ENCODE measurements at regions of chrX and their contacts with region 1.

Region 1: DNA sequence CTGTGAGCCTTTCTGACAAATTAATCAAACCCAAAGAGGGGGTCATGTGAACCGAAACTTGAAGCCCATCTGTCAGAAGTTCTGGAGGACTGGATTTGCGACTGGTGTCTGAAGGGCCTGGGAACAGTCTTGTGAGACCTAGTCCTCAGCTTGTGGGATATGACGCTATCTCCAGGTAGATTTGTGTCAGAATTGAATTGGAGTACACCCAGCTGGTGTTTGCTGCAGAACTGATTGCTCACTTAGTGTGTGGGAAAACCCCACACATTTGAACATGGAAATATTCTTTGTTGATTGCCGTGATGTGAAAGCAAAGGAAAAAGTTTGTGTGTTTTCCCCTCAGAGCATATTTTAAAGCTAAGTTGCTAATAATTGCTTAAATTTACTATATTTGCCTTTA is 30.3 kb upstream of the TMSB15B start:
- DNase-seq: no peak
- H3K4me3 Mint-ChIP-seq: no peak overlapping the region
- H3K27ac Mint-ChIP-seq: peak overlapping the region; percentile 51
- H3K4me1 Mint-ChIP-seq: peaks cover 3% of the 10 kb centered on the region
- H3K27me3 Mint-ChIP-seq: no peaks in the 10 kb centered on the region

Region 2: GRCh38 chrX:103845165-103845653 is 86.9 kb before region 1 on chrX:
- intact Hi-C with region 1: loop called (anchors 5 kb)
- DNase-seq: peak; percentile 82
- H3K4me3 Mint-ChIP-seq: no peak overlapping the region
- H3K27ac Mint-ChIP-seq: no peak overlapping the region
- H3K4me1 Mint-ChIP-seq: peaks cover 2% of the 10 kb centered on the region
- H3K27me3 Mint-ChIP-seq: no peaks in the 10 kb centered on the region

Region 3: GRCh38 chrX:103918581-103919269 is 13.4 kb before region 1 on chrX:
- intact Hi-C with region 1: loop called (anchors 2 kb)
- DNase-seq: peak; percentile 88
- H3K4me3 Mint-ChIP-seq: peak overlapping the region; percentile 97
- H3K27ac Mint-ChIP-seq: peak overlapping the region; percentile 97
- H3K4me1 Mint-ChIP-seq: peaks cover 14% of the 10 kb centered on the region
- H3K27me3 Mint-ChIP-seq: no peaks in the 10 kb centered on the region

Region 4: DNA sequence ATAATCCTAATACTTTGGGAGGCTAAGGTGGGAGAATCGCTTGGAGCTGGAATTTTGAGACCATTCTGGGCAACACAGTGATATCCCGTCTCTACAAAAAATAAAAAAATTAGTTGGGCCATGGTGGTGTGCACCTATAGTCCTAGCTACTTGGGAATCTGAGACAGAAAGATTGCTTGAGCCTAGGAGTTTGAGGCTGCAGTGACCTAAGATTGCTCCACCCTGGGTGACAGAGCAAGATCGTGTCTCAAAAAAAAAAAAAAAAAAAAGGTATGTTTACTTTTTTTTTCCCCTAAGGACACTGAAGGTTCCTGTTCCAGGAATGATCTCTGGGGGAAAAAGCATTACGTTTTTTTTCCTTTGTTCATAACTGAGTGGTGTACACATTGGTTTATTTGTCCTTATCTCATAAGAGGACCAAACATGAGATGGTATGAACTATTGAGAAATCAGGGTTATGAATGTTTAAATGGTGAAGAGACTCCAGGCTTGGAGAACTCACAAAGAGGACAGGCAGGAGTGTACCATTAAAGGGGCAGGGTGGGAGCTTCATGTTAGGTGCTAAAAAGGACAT is 513.4 kb after region 1 on chrX:
- intact Hi-C with region 1: no loop called
- DNase-seq: no peak
- H3K4me3 Mint-ChIP-seq: no peak overlapping the region
- H3K27ac Mint-ChIP-seq: no peak overlapping the region
- H3K4me1 Mint-ChIP-seq: no peaks in the 10 kb centered on the region
- H3K27me3 Mint-ChIP-seq: no peaks in the 10 kb centered on the region